HCT116 (cell line): ENCODE measurements at regions of chr14 and their contacts with region 1.

Region 1: DNA sequence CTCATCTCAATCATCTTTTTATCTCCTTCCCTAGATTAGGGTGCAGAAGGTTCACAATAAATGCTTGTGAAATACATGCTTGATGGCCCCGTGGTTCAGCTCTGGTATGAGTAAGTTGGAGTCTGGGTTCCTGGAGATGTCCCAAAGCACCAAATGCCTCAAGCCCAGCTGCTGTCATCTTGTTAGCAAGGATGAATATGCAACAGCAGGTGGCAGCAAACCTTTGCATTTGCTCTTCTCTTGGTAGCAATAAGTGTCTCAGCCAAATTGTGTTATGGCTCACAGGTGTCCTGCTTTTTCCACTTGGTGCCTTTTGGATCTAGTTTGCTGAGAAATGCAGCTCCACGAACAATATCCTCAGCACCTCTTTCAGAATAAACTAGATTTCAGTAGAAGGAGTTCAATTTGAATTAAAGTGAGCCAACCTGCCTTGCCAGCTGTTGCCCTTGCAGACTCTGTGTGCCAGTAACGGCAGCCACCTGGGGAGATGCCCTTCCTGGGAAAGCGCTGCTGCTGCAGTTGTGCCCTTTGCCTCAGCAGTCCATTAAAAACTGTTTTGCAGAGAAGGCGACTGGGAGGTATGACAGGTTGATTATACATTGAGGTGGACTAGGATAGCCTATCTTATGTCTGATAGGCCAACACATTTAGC is 417.3 kb downstream of the SNAPC1 start:
- DNase-seq: peak; percentile 13
- ATAC-seq: no peak; the same call in 1 of the 2 replicates
- H3K4me3 ChIP-seq: no peak overlapping the region
- H3K27ac ChIP-seq: no peak overlapping the region
- H3K4me1 ChIP-seq: no peaks in the 10 kb centered on the region
- H3K27me3 ChIP-seq: no peaks in the 10 kb centered on the region
- CTCF ChIP-seq: peak; percentile 27 to 52 (median 51); a peak in 4 of 6 replicates
- POLR2A ChIP-seq: no peak
- RAD21 ChIP-seq: peak; percentile 60

Region 2: DNA sequence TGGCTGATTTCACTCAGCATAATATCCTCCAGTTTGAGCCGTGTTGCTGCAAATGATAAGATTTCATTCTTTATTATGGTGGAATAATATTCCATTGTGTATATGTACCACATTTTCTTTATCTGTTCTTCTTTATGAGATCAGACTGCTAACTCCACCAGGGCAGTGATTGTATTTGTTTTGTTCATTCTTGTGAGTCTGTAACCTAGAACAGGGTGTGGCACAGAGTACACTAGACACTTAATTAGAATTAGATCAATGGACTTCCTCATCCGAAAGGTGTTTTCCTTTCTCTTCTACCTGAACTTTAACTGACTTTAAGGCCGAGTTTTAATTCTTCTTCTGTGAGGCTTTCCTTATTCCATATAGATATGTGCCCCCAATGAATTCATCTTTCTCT is 133.7 kb after region 1 on chr14:
- CTCF ChIA-PET with region 1: no interaction called
- POLR2A ChIA-PET with region 1: no interaction called
- RAD21 ChIA-PET with region 1: no interaction called
- intact Hi-C with region 1: no loop called
- DNase-seq: no peak
- ATAC-seq: no peak
- H3K4me3 ChIP-seq: no peak overlapping the region
- H3K27ac ChIP-seq: no peak overlapping the region
- H3K4me1 ChIP-seq: no peaks in the 10 kb centered on the region
- H3K27me3 ChIP-seq: no peaks in the 10 kb centered on the region
- CTCF ChIP-seq: no peak
- POLR2A ChIP-seq: no peak
- RAD21 ChIP-seq: no peak

Region 3: GRCh38 chr14:62409626-62410300 is 230.3 kb after region 1 on chr14:
- CTCF ChIA-PET with region 1: no interaction called
- POLR2A ChIA-PET with region 1: no interaction called
- RAD21 ChIA-PET with region 1: no interaction called
- intact Hi-C with region 1: no loop called
- DNase-seq: no peak
- ATAC-seq: no peak
- H3K4me3 ChIP-seq: no peak overlapping the region
- H3K27ac ChIP-seq: no peak overlapping the region
- H3K4me1 ChIP-seq: no peaks in the 10 kb centered on the region
- H3K27me3 ChIP-seq: no peaks in the 10 kb centered on the region
- CTCF ChIP-seq: no peak
- POLR2A ChIP-seq: no peak
- RAD21 ChIP-seq: no peak

Region 4: GRCh38 chr14:63044994-63045611 is 865.6 kb after region 1 on chr14 and contains the start of gene KCNH5:
- CTCF ChIA-PET with region 1: interaction called, 4 read pairs
- POLR2A ChIA-PET with region 1: no interaction called
- RAD21 ChIA-PET with region 1: no interaction called
- intact Hi-C with region 1: loop called (anchors 5 kb)
- DNase-seq: no peak
- ATAC-seq: no peak
- H3K4me3 ChIP-seq: no peak within 1 kb of the TSS
- H3K27ac ChIP-seq: no peak within 1 kb of the TSS
- H3K4me1 ChIP-seq: no peaks in the 10 kb centered on the region
- H3K27me3 ChIP-seq: no peaks in the 10 kb centered on the region; the same call in 1 of the 2 replicates
- CTCF ChIP-seq: no peak
- POLR2A ChIP-seq: no peak
- RAD21 ChIP-seq: no peak
- total RNA-seq, gene KCNH5: not detected

Region 5: GRCh38 chr14:63308723-63309317 is 1129.3 kb after region 1 on chr14:
- CTCF ChIA-PET with region 1: no interaction called
- POLR2A ChIA-PET with region 1: no interaction called
- RAD21 ChIA-PET with region 1: no interaction called
- intact Hi-C with region 1: loop called (anchors 1 kb)
- DNase-seq: peak; percentile 40
- ATAC-seq: peak; percentile 98
- H3K4me3 ChIP-seq: no peak overlapping the region
- H3K27ac ChIP-seq: no peak overlapping the region
- H3K4me1 ChIP-seq: no peaks in the 10 kb centered on the region
- H3K27me3 ChIP-seq: peaks cover 34% of the 10 kb centered on the region
- CTCF ChIP-seq: peak; percentile 46 to 81 (median 79); a peak in 5 of 6 replicates
- POLR2A ChIP-seq: no peak
- RAD21 ChIP-seq: peak; percentile 54